RWPE1 (cell line): ENCODE measurements at regions of chr6 and their contacts with region 1.

Region 1: GRCh38 chr6:123859291-123859690 is 55.6 kb downstream of the NKAIN2 start:
- DNase-seq: no peak
- H3K27ac ChIP-seq: no peak overlapping the region
- CTCF ChIP-seq: no peak

Region 2: DNA sequence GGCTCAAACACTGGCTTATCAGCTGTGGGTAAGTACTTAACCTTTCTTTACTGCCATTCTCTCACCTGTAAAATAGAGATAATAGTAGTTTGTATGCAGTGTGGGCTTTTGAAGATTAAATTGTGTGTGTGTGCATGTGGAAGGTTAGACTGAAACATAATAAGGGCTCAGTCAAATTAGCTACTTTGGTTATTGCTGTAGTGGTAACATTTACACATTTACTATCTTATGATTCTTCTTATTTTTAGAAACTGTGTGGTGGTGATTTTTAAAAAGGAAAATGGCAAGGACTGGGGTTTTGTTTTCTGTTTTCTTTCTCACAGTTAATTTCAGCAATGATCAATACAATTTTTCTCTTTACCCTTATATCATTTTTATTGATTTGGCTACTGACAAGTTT is 151.3 kb after region 1 on chr6:
- CTCF ChIA-PET with region 1: interaction called, 11 read pairs
- POLR2A ChIA-PET with region 1: no interaction called
- DNase-seq: no peak
- H3K27ac ChIP-seq: no peak overlapping the region
- CTCF ChIP-seq: no peak